ENCODE measurements at regions of chr19 and their contacts with region 1.

Region 1: DNA sequence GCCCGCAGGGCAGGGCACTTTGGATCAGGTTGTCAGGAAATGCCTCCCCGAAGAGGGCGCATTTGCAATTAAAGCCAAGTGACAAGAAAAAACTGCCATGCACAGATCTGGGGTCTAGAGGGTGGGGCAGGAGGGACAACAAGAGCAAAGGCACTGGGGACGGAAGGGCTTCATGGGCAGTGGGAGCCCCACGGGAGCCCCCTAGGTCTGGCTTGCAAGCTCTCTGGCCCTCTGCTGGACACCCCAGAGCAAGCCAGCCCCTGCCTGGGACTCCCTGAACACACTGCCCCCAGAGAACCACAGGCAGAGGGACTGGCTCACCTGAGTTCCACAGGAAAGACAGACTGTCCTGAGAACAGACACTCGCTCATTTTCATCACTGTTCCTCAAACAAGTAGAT is 30.2 kb upstream of the C19orf12 start:
- DNase-seq: no peak
- H3K4me3 ChIP-seq: no peak overlapping the region
- H3K27ac ChIP-seq: no peak overlapping the region
- H3K4me1 ChIP-seq: no peaks in the 10 kb centered on the region
- H3K27me3 ChIP-seq: no peaks in the 10 kb centered on the region
- CTCF ChIP-seq: no peak
- EP300 ChIP-seq: no peak
- POLR2A ChIP-seq: no peak

Region 2: GRCh38 chr19:29811125-29812079 is 66.1 kb after region 1 on chr19 and contains the start of gene CCNE1:
- in situ Hi-C with region 1: no loop called
- intact Hi-C with region 1: no loop called
- DNase-seq: peak; percentile 97
- H3K4me3 ChIP-seq: peak within 1 kb of the TSS; percentile 25 to 89 (median 66)
- H3K27ac ChIP-seq: peak within 1 kb of the TSS; percentile 59 to 83 (median 80)
- H3K4me1 ChIP-seq: peaks cover 5 to 10% (median 9%) of the 10 kb centered on the region in 4 donors
- H3K27me3 ChIP-seq: no peaks in the 10 kb centered on the region
- CTCF ChIP-seq: no peak
- EP300 ChIP-seq: no peak
- POLR2A ChIP-seq: peak; percentile 34
- total RNA-seq, gene CCNE1: 1.7 to 30.3 (median 5.8) TPM

Region 3: DNA sequence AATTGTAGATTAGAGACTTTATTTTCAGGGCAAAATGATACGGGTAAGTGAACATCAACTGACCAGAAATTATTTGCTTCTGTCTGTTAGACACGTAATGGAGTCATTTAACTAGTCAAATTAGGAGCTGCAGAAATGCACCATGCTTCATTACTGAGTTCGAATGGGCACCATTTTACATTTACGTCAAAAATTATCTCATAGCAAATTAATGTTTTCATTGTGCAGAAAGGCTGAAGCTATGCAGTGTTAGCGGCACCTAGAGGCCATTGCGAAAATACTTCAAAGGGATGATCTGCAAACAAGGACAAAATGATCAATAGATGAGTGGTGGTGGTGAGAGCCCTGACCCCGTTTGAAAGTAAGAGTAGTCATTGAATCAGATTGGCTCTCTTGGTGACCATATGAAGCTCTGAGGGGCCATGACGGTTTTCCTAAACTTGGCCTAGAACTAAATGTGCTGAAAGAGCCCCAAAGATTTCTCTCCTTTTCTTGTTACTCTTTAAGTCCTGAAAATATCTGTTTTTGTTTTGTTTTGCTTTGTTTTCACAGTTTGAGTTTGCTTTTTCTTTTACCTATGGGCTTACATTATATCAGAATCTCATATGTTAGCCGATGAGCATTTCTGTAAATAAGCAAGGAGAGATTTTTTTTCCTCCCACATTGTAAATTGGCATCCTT is 904.8 kb after region 1 on chr19:
- in situ Hi-C with region 1: loop called in 3 of 4 experiments (anchors 25 kb)
- intact Hi-C with region 1: no loop called
- DNase-seq: no peak
- H3K4me3 ChIP-seq: no peak overlapping the region
- H3K27ac ChIP-seq: no peak overlapping the region
- H3K4me1 ChIP-seq: no peaks in the 10 kb centered on the region
- H3K27me3 ChIP-seq: peaks cover 24% of the 10 kb centered on the region
- CTCF ChIP-seq: peak; percentile 50 to 67 (median 65)
- EP300 ChIP-seq: no peak
- POLR2A ChIP-seq: no peak

Measured in transverse colon (tissue), 4 donors.